ENCODE measurements at regions of chr20 and their contacts with region 1.

Region 1: DNA sequence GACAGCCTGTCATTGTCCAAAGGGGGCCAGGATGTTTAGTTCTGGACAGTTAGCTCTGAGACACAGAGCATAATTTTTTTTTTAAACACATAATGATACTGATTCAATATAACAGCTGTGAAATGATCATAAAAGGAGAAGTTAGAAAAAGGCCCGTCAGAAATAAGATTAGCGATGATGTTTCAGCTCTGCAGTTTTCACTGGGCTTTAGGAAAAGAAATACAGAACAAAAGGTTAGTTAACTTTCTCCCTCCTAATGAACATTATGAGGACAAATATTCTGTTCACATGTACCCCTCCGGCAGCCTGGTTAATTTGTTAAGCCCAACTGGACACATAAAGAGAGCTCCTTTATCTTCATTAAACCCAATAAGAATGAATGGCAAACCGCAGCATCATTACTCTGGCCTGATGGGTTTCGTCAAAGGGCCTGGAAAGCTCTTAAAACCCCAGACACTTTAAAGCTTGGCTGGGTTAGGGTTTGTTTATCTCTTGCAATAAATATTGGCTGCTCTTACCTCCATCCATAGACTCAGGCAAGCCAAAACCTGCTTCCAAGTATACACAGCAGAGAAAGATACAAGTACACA is 394.6 kb downstream of the KIF16B start:
- DNase-seq: no peak
- H3K4me3 ChIP-seq: no peak overlapping the region
- H3K27ac ChIP-seq: no peak overlapping the region
- H3K4me1 ChIP-seq: no peaks in the 10 kb centered on the region
- H3K27me3 ChIP-seq: no peaks in the 10 kb centered on the region
- CTCF ChIP-seq: no peak
- EP300 ChIP-seq: no peak
- POLR2A ChIP-seq: no peak

Region 2: GRCh38 chr20:16095226-16095625 is 83.4 kb before region 1 on chr20:
- intact Hi-C with region 1: no loop called
- DNase-seq: peak; percentile 26 to 71 (median 40)
- H3K4me3 ChIP-seq: no peak overlapping the region
- H3K27ac ChIP-seq: no peak overlapping the region
- H3K4me1 ChIP-seq: peaks cover 11% of the 10 kb centered on the region
- H3K27me3 ChIP-seq: no peaks in the 10 kb centered on the region
- CTCF ChIP-seq: no peak
- EP300 ChIP-seq: no peak
- POLR2A ChIP-seq: no peak

Region 3: DNA sequence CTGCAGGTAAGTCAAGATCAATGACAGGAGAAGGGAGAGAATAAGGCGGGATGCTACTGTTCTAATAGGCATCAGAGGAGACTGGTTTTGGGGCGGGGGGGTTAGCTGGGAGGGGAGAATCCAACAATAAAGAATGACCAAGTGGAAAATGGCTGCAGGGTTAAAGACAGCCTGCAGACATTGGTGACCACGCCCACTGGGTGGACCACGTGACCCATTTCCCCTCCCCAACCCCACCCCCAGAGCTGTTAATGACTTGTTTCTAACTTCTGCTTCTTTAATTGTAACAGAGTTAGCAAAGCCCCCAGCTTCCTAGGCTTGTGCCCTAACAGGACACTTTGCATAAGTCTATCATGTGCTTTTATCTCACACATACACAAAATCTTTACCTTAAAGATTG is 50.1 kb after region 1 on chr20:
- intact Hi-C with region 1: loop called in 1 of 4 experiments (anchors 1 kb)
- DNase-seq: no peak
- H3K4me3 ChIP-seq: no peak overlapping the region
- H3K27ac ChIP-seq: no peak overlapping the region
- H3K4me1 ChIP-seq: no peaks in the 10 kb centered on the region
- H3K27me3 ChIP-seq: no peaks in the 10 kb centered on the region
- CTCF ChIP-seq: no peak
- EP300 ChIP-seq: no peak
- POLR2A ChIP-seq: no peak

Region 4: DNA sequence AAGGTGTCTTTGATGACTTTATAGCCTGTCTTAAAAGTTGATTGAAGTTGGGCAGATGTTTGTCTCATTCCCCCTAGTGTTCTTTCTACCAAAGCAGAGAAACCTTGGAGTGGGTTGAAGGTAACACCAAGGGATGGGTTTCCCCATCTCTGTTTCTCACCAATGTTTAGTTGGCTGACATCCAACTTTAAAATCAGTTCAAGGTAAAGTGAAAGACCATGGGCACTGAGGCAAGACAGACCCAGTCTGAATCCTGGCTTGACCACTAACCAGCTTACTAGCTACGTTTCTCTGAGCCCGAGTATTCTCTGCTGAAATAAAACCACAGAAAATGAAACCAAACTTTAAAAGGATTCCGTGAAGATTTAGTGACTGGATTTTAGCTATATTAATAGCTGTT is 135.7 kb after region 1 on chr20:
- intact Hi-C with region 1: no loop called
- DNase-seq: no peak
- H3K4me3 ChIP-seq: no peak overlapping the region
- H3K27ac ChIP-seq: no peak overlapping the region
- H3K4me1 ChIP-seq: no peaks in the 10 kb centered on the region
- H3K27me3 ChIP-seq: no peaks in the 10 kb centered on the region
- CTCF ChIP-seq: no peak
- EP300 ChIP-seq: no peak
- POLR2A ChIP-seq: no peak